ENCODE measurements at regions of chr20 and their contacts with region 1.

Region 1: DNA sequence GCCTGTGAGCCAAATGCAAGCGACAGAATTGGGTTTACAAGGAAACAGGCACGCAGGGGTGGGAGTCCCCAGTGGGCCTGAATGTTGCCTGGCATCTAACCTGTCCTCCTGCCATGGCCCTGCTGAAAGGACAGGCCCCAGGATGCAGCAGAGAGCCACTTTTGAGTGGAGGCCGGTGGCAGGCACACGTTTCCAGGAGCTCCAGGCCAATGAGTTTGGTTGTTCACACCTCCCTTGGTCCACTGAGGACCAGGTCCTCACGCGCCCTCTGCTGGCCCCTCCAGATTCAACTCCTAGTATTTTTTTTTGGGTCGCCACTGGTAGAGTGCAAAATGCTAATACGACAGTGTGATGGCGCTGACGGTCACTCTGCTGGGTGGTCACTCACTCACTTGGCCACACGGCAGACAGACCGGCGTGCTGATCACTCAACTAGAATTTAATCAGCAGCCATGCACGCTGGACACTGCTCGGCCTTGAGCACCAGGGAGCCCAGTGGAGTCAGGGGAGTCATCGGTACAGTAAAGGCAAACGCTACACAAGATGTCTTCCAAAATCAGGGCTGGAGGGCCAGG is 81.7 kb upstream of the NFATC2 start:
- DNase-seq: peak; percentile 89
- H3K4me3 ChIP-seq: no peak overlapping the region
- H3K27ac ChIP-seq: no peak overlapping the region
- H3K4me1 ChIP-seq: peaks cover 21% of the 10 kb centered on the region
- CTCF ChIP-seq: peak; percentile 90

Region 2: GRCh38 chr20:50987592-50988210 is 636.5 kb before region 1 on chr20:
- CTCF ChIA-PET with region 1: no interaction called
- POLR2A ChIA-PET with region 1: no interaction called
- intact Hi-C with region 1: loop called (anchors 1 kb)
- DNase-seq: peak; percentile 81
- H3K4me3 ChIP-seq: no peak overlapping the region
- H3K27ac ChIP-seq: no peak overlapping the region
- H3K4me1 ChIP-seq: peaks cover 10% of the 10 kb centered on the region
- CTCF ChIP-seq: peak; percentile 87

Region 3: DNA sequence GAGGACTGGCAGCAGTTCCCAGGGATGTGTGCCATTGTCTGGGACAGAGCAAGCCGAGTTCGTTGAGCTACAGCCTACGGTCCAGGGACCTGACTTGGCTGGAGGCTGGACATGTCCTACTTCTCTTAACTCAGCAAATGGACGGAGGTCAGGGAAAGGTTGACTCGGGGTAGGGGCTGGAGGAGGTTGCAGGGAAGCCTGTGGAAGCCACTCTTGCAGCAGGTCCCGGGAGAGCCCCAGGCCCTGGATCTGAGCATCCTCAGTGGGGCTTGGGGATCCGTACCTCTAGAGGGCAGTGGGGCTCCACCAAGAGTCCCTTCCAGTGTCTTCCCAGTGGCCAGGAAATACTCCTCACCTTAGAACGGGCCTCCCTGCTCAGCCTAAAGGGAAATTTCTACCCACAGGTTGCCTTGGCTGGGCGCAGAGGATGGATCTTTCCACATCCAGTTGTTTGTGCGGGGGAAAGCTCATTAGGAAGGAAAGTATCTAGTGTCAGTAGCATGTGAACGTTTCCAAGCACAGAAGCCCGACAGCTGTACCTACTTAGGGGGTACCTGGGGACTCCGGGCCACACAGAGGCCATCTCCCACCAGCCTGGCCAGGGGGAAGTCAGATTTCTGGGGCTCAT is 252.0 kb before region 1 on chr20:
- CTCF ChIA-PET with region 1: interaction called, 3 read pairs
- POLR2A ChIA-PET with region 1: interaction called, 3 read pairs
- intact Hi-C with region 1: loop called (anchors 1 kb)
- DNase-seq: peak; percentile 81
- H3K4me3 ChIP-seq: no peak overlapping the region
- H3K27ac ChIP-seq: no peak overlapping the region
- H3K4me1 ChIP-seq: peaks cover 22% of the 10 kb centered on the region
- CTCF ChIP-seq: peak; percentile 91

Region 4: GRCh38 chr20:51767010-51767558 is 142.8 kb after region 1 on chr20:
- CTCF ChIA-PET with region 1: no interaction called
- POLR2A ChIA-PET with region 1: no interaction called
- intact Hi-C with region 1: no loop called
- DNase-seq: peak; percentile 82
- H3K4me3 ChIP-seq: peak overlapping the region; percentile 68
- H3K27ac ChIP-seq: no peak overlapping the region
- H3K4me1 ChIP-seq: peaks cover 7% of the 10 kb centered on the region
- CTCF ChIP-seq: no peak

Region 5: GRCh38 chr20:51860111-51860882 is 236.1 kb after region 1 on chr20:
- CTCF ChIA-PET with region 1: no interaction called
- POLR2A ChIA-PET with region 1: no interaction called
- intact Hi-C with region 1: no loop called
- DNase-seq: no peak
- H3K4me3 ChIP-seq: no peak overlapping the region
- H3K27ac ChIP-seq: no peak overlapping the region
- H3K4me1 ChIP-seq: no peaks in the 10 kb centered on the region
- CTCF ChIP-seq: no peak